ENCODE measurements at regions of chr12 and their contacts with region 1.

Region 1: DNA sequence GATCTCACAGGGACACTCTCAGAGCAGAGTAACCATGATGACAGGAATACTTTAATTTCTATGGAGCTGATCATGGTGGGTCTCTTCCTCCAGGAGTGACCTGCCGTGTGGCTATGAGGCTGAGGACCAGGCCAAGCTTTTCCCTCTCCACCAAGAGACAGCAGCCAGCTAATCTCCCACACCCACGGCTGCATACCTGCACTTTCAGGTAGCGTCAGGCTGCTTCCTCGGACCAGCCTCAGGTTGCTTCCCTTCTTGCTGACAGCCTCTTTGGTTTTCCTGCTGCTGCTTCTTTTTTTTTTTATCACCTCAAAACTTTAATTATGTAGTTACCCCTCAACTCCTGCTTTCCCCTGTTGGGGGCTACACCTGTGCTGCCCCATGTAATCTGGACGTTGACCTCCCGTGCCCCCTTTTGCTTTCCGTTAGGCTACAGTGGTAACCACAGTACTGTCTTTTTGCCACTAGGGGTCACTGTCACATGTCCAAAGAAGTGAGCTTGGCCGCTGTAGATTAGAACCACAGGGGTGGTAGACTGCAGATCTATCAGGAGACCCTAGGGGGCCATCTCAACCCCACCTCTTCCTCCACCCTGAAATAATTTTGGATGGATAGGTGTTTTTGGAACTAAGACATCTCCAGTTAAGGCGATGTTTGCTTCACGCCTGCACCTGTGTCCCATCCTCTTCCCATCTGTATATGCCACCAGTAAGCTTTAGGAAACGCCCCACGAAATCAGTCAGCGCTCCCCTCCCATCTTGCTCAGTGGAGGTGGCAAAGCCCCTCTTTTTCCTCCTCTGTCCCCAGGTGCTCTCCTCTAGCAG is 7.8 kb upstream of the PIP4K2C start:
- DNase-seq: peak; percentile 30 to 90 (median 74)
- ATAC-seq: peak; percentile 100
- H3K4me3 ChIP-seq: no peak overlapping the region
- H3K4me3 Mint-ChIP-seq: no peak overlapping the region
- H3K27ac ChIP-seq: no peak overlapping the region
- H3K27ac Mint-ChIP-seq: no peak overlapping the region
- H3K4me1 ChIP-seq: no peaks in the 10 kb centered on the region
- H3K4me1 Mint-ChIP-seq: peaks cover 2% of the 10 kb centered on the region
- H3K27me3 ChIP-seq: peaks cover 0 to 7% of the 10 kb centered on the region in 2 experiments
- H3K27me3 Mint-ChIP-seq: no peaks in the 10 kb centered on the region
- CTCF ChIP-seq: peak; percentile 95

Region 2: DNA sequence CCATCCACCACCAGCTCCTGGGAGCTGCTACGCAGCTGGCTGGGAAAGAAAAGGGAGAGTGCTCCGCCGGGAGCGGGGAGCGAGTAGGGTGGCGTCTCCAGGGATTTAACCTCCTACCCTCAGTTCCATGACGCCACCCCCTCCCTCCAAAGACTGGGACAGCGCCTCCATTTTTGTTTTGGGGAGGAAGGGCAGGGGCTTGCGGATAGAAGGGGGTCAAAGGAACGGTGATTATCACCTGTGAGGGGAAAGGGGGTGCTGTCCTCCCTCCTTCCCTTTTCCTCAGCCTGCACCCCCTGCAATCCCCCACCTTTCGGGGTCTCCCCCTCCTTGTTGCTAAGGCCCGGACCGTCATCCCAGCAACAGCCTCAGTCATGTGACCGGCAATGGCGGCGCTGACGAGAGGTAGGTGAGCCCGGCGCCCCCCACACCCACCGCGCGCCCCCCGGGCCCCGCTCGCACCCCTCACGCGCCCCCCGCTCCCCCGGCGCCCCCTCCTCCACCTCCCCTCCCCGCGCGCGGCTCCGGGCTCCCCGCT is 21.3 kb after region 1 on chr12 and contains the start of gene DTX3:
- CTCF ChIA-PET with region 1: interaction called, 36 read pairs
- POLR2A ChIA-PET with region 1: no interaction called
- intact Hi-C with region 1: no loop called
- DNase-seq: peak in 7 of 9 experiments; percentile 33 to 70 (median 51)
- ATAC-seq: peak; percentile 72
- H3K4me3 ChIP-seq: peak within 1 kb of the TSS; percentile 71 to 72
- H3K4me3 Mint-ChIP-seq: peak within 1 kb of the TSS; percentile 90
- H3K27ac ChIP-seq: peak within 1 kb of the TSS; percentile 52 to 73
- H3K27ac Mint-ChIP-seq: peak within 1 kb of the TSS; percentile 86
- H3K4me1 ChIP-seq: peaks cover 32% of the 10 kb centered on the region
- H3K4me1 Mint-ChIP-seq: peaks cover 30% of the 10 kb centered on the region
- H3K27me3 ChIP-seq: no peaks in the 10 kb centered on the region
- H3K27me3 Mint-ChIP-seq: no peaks in the 10 kb centered on the region
- CTCF ChIP-seq: no peak
- total RNA-seq, gene DTX3: 33.2 to 33.7 TPM

Region 3: GRCh38 chr12:57621497-57622292 is 38.5 kb after region 1 on chr12:
- CTCF ChIA-PET with region 1: interaction called, 150 read pairs
- POLR2A ChIA-PET with region 1: no interaction called
- intact Hi-C with region 1: loop called (anchors 1 kb)
- DNase-seq: peak in 8 of 9 experiments; percentile 41 to 80 (median 64)
- ATAC-seq: peak; percentile 66
- H3K4me3 ChIP-seq: peak overlapping the region; percentile 45 to 52
- H3K4me3 Mint-ChIP-seq: peak overlapping the region; percentile 82
- H3K27ac ChIP-seq: no peak overlapping the region
- H3K27ac Mint-ChIP-seq: no peak overlapping the region
- H3K4me1 ChIP-seq: peaks cover 30% of the 10 kb centered on the region
- H3K4me1 Mint-ChIP-seq: peaks cover 26% of the 10 kb centered on the region
- H3K27me3 ChIP-seq: peaks cover 71 to 75% of the 10 kb centered on the region in 2 experiments
- H3K27me3 Mint-ChIP-seq: peaks cover 93% of the 10 kb centered on the region
- CTCF ChIP-seq: peak; percentile 83

Region 4: DNA sequence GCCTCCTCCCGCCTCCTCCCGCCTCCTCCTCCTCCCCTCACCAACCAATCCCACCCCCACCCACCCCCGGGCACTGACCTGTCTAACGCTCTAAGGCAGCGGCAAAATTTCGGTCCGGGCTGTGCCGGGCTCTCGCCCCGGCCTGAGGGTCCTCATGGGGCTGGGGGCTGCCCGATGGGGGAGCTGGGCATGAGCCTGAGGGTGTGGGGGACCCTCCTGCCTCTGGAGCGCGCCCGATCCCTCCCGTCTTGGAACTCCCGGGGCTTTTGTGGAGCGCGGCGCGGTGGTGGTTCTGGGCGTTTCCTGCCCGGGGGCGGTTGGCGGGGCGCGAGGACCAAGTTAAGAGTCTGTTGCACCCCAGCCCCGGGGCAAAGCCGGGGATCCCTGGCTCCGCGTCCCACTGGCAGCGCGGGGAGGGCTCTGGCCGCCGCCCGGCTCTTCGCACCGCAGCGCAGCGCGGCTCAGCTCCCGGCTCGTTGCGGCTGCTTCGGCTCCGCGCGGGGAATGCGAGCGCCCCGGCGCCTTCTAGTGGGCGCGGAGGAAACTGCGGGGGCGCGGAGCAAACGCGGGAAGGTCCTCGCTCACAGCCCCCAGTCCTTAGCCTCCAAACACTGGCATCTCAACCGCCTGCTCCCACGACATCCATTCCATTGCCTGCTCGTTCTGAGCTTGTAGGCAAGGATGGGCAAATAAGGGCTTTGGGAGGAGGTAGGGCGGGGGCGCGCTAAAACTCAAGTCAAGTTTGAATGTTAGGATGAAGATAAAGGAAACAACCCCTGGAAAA is 49.7 kb after region 1 on chr12 and contains the start of gene B4GALNT1:
- CTCF ChIA-PET with region 1: interaction called, 29 read pairs
- POLR2A ChIA-PET with region 1: interaction called, 3 read pairs
- intact Hi-C with region 1: loop called (anchors 1 kb)
- DNase-seq: peak; percentile 39 to 79 (median 55)
- ATAC-seq: peak; percentile 92
- H3K4me3 ChIP-seq: peak within 1 kb of the TSS; percentile 50 to 57
- H3K4me3 Mint-ChIP-seq: peak within 1 kb of the TSS; percentile 71
- H3K27ac ChIP-seq: no peak within 1 kb of the TSS
- H3K27ac Mint-ChIP-seq: no peak within 1 kb of the TSS
- H3K4me1 ChIP-seq: peaks cover 13% of the 10 kb centered on the region
- H3K4me1 Mint-ChIP-seq: peaks cover 12% of the 10 kb centered on the region
- H3K27me3 ChIP-seq: peaks cover 10 to 28% of the 10 kb centered on the region in 2 experiments
- H3K27me3 Mint-ChIP-seq: peaks cover 53% of the 10 kb centered on the region
- CTCF ChIP-seq: peak; percentile 86
- total RNA-seq, gene B4GALNT1: not detected

Region 5: GRCh38 chr12:57899010-57899662 is 315.9 kb after region 1 on chr12:
- CTCF ChIA-PET with region 1: interaction called, 11 read pairs
- POLR2A ChIA-PET with region 1: no interaction called
- intact Hi-C with region 1: loop called (anchors 2 kb)
- DNase-seq: peak; percentile 55 to 95 (median 76)
- ATAC-seq: peak; percentile 89
- H3K4me3 ChIP-seq: no peak overlapping the region
- H3K4me3 Mint-ChIP-seq: peak overlapping the region; percentile 71
- H3K27ac ChIP-seq: peak overlapping the region; percentile 55 to 78
- H3K27ac Mint-ChIP-seq: peak overlapping the region; percentile 99
- H3K4me1 ChIP-seq: peaks cover 45% of the 10 kb centered on the region
- H3K4me1 Mint-ChIP-seq: peaks cover 50% of the 10 kb centered on the region
- H3K27me3 ChIP-seq: no peaks in the 10 kb centered on the region
- H3K27me3 Mint-ChIP-seq: peaks cover 3% of the 10 kb centered on the region
- CTCF ChIP-seq: no peak